Endothelial cell of umbilical vein (primary cell): ENCODE measurements at regions of chr7 and their contacts with region 1.

Region 1: GRCh38 chr7:17298207-17298839 is at the start of gene AHR:
- DNase-seq: peak; percentile 89
- H3K4me3 ChIP-seq: peak within 1 kb of the TSS; percentile 62 to 97 (median 90)
- H3K27ac ChIP-seq: peak within 1 kb of the TSS; percentile 56
- H3K4me1 ChIP-seq: peaks cover 29% of the 10 kb centered on the region
- H3K27me3 ChIP-seq: no peaks in the 10 kb centered on the region
- CTCF ChIP-seq: no peak
- POLR2A ChIP-seq: peak; percentile 65
- total RNA-seq, gene AHR: 29.3 and 31.8 TPM in 2 replicates

Region 2: GRCh38 chr7:16695621-16696237 is 602.6 kb before region 1 on chr7:
- CTCF ChIA-PET with region 1: interaction called, 8 read pairs
- POLR2A ChIA-PET with region 1: no interaction called
- dilution Hi-C with region 1: no loop called
- intact Hi-C with region 1: loop called (anchors 1 kb)
- DNase-seq: peak; percentile 74
- H3K4me3 ChIP-seq: no peak overlapping the region
- H3K27ac ChIP-seq: no peak overlapping the region
- H3K4me1 ChIP-seq: peaks cover 7% of the 10 kb centered on the region
- H3K27me3 ChIP-seq: no peaks in the 10 kb centered on the region
- CTCF ChIP-seq: peak; percentile 44 to 54
- POLR2A ChIP-seq: no peak

Region 3: GRCh38 chr7:16982640-16983350 is 315.5 kb before region 1 on chr7:
- CTCF ChIA-PET with region 1: interaction called, 291 read pairs
- POLR2A ChIA-PET with region 1: interaction called, 8 read pairs
- dilution Hi-C with region 1: no loop called
- intact Hi-C with region 1: loop called (anchors 1 kb)
- DNase-seq: peak; percentile 69
- H3K4me3 ChIP-seq: no peak overlapping the region
- H3K27ac ChIP-seq: no peak overlapping the region
- H3K4me1 ChIP-seq: peaks cover 26% of the 10 kb centered on the region
- H3K27me3 ChIP-seq: no peaks in the 10 kb centered on the region
- CTCF ChIP-seq: peak; percentile 75 to 76
- POLR2A ChIP-seq: no peak

Region 4: DNA sequence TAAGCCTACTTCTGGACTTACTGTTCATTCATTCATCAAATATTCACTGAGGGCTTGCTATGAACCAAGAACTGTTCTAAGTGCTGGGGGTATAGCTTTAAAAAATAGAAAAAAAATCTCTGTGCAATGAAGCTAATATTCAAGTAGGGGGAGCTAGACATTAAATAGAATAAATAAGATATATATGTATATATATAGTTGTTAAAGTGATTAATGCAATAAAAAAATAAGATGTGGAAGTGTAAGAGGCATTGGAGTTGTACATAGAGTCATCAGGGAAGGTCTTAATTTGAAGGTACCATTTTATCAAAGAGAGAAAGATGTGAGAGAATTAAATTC is 235.3 kb before region 1 on chr7:
- CTCF ChIA-PET with region 1: interaction called, 135 read pairs
- POLR2A ChIA-PET with region 1: interaction called, 3 read pairs
- dilution Hi-C with region 1: no loop called
- intact Hi-C with region 1: loop called (anchors 1 kb)
- DNase-seq: no peak
- H3K4me3 ChIP-seq: no peak overlapping the region
- H3K27ac ChIP-seq: no peak overlapping the region
- H3K4me1 ChIP-seq: peaks cover 16% of the 10 kb centered on the region
- H3K27me3 ChIP-seq: no peaks in the 10 kb centered on the region
- CTCF ChIP-seq: no peak
- POLR2A ChIP-seq: no peak

Region 5: GRCh38 chr7:17331891-17332501 is 33.7 kb after region 1 on chr7:
- CTCF ChIA-PET with region 1: interaction called, 11 read pairs
- POLR2A ChIA-PET with region 1: interaction called, 4 read pairs
- dilution Hi-C with region 1: no loop called
- intact Hi-C with region 1: no loop called
- DNase-seq: no peak
- H3K4me3 ChIP-seq: no peak overlapping the region
- H3K27ac ChIP-seq: no peak overlapping the region
- H3K4me1 ChIP-seq: no peaks in the 10 kb centered on the region
- H3K27me3 ChIP-seq: no peaks in the 10 kb centered on the region
- CTCF ChIP-seq: no peak
- POLR2A ChIP-seq: no peak

Region 6: DNA sequence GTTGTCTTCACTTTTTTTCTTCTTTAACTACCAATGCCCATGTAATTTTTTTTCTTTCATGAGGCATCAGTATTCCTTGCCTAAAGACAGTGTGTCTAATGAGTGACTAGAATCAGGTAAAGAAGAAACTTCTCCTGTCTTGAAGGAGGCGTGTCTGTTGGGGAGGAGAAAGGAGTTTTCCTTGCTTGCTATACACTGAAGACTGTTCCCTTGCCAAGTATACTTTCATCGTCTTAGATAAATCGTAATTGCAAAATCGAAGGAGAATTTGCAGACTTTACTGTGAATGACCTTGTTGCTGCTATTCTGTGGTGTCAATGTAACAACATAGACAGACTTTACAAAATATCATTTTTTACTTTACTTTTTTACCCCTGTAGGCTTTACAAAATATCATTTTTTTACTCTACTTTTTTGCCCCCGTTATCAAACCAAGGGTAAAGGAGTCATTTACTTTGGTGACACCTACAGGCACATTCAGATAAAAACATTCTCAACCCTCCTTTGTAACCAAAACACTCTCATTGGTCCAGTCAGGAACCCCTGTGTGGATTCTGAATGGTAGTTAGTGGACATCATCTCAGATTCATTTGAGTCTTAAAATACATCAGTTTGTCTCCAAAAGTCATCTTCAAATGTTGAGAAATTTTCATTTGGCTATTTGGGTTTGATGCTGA is 232.6 kb after region 1 on chr7:
- CTCF ChIA-PET with region 1: interaction called, 57 read pairs
- POLR2A ChIA-PET with region 1: no interaction called
- dilution Hi-C with region 1: no loop called
- intact Hi-C with region 1: no loop called
- DNase-seq: peak; percentile 60
- H3K4me3 ChIP-seq: no peak overlapping the region
- H3K27ac ChIP-seq: no peak overlapping the region
- H3K4me1 ChIP-seq: peaks cover 4% of the 10 kb centered on the region
- H3K27me3 ChIP-seq: no peaks in the 10 kb centered on the region
- CTCF ChIP-seq: peak in 1 of 2 donors; percentile 16
- POLR2A ChIP-seq: no peak

Region 7: GRCh38 chr7:17769918-17770317 is 471.6 kb after region 1 on chr7:
- CTCF ChIA-PET with region 1: interaction called, 23 read pairs
- POLR2A ChIA-PET with region 1: interaction called, 4 read pairs
- dilution Hi-C with region 1: no loop called
- intact Hi-C with region 1: no loop called
- DNase-seq: peak; percentile 64
- H3K4me3 ChIP-seq: no peak overlapping the region
- H3K27ac ChIP-seq: no peak overlapping the region
- H3K4me1 ChIP-seq: no peaks in the 10 kb centered on the region
- H3K27me3 ChIP-seq: no peaks in the 10 kb centered on the region
- CTCF ChIP-seq: peak; percentile 71 to 75
- POLR2A ChIP-seq: no peak